A549 (cell line): ENCODE measurements at regions of chrX and their contacts with region 1.

Region 1: GRCh38 chrX:69285881-69286564 is 120.8 kb upstream of the PJA1 start:
- DNase-seq: peak; percentile 21 to 67
- ATAC-seq: peak; percentile 74 to 92; a peak in 4 of 6 replicates
- H3K4me3 ChIP-seq: peak overlapping the region; percentile 48
- H3K27ac ChIP-seq: peak overlapping the region; percentile 60 to 82; a peak in 5 of 6 replicates
- H3K4me1 ChIP-seq: no peaks in the 10 kb centered on the region
- CTCF ChIP-seq: peak; percentile 56
- EP300 ChIP-seq: no peak
- POLR2A ChIP-seq: no peak
- RAD21 ChIP-seq: peak; percentile 81 to 87

Region 2: GRCh38 chrX:68822641-68823410 is 463.2 kb before region 1 on chrX:
- CTCF ChIA-PET with region 1: interaction called, 91 read pairs
- POLR2A ChIA-PET with region 1: no interaction called
- DNase-seq: peak; percentile 36 to 50
- ATAC-seq: peak; percentile 80 to 93
- H3K4me3 ChIP-seq: no peak overlapping the region
- H3K27ac ChIP-seq: no peak overlapping the region
- H3K4me1 ChIP-seq: no peaks in the 10 kb centered on the region
- CTCF ChIP-seq: peak; percentile 61
- EP300 ChIP-seq: no peak
- POLR2A ChIP-seq: no peak
- RAD21 ChIP-seq: peak; percentile 75 to 79

Region 3: DNA sequence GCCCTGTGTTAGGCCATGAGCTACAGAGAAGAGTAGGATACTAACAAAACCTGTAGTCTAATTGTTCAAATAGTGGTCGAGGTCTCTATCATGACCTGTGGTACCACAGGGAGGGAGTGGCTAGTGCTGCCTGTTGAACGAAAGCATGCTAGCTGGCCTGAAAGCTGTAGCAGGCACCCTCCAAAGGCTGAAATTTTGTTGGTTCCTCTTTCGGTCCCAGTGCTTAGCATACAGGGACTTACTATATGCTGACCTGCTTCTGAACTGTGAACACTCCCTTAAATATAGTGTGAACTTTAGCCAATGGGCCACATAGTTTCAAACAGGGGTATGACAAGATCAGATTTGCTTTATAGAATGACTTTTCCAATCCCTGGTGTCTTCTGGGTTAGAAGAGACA is 234.1 kb before region 1 on chrX:
- CTCF ChIA-PET with region 1: no interaction called
- POLR2A ChIA-PET with region 1: no interaction called
- DNase-seq: no peak
- ATAC-seq: no peak
- H3K4me3 ChIP-seq: no peak overlapping the region
- H3K27ac ChIP-seq: no peak overlapping the region
- H3K4me1 ChIP-seq: no peaks in the 10 kb centered on the region
- CTCF ChIP-seq: no peak
- EP300 ChIP-seq: no peak
- POLR2A ChIP-seq: no peak
- RAD21 ChIP-seq: no peak

Region 4: GRCh38 chrX:69759921-69760625 is 474.1 kb after region 1 on chrX:
- CTCF ChIA-PET with region 1: no interaction called
- POLR2A ChIA-PET with region 1: no interaction called
- DNase-seq: no peak
- ATAC-seq: no peak
- H3K4me3 ChIP-seq: no peak overlapping the region
- H3K27ac ChIP-seq: no peak overlapping the region
- H3K4me1 ChIP-seq: no peaks in the 10 kb centered on the region
- CTCF ChIP-seq: no peak
- EP300 ChIP-seq: no peak
- POLR2A ChIP-seq: no peak
- RAD21 ChIP-seq: no peak

Region 5: GRCh38 chrX:69795702-69796101 is 509.7 kb after region 1 on chrX:
- CTCF ChIA-PET with region 1: no interaction called
- POLR2A ChIA-PET with region 1: no interaction called
- DNase-seq: no peak
- ATAC-seq: no peak
- H3K4me3 ChIP-seq: no peak overlapping the region
- H3K27ac ChIP-seq: no peak overlapping the region
- H3K4me1 ChIP-seq: no peaks in the 10 kb centered on the region
- CTCF ChIP-seq: no peak
- EP300 ChIP-seq: no peak
- POLR2A ChIP-seq: no peak
- RAD21 ChIP-seq: no peak